ENCODE measurements at regions of chrX and their contacts with region 1.

Region 1: DNA sequence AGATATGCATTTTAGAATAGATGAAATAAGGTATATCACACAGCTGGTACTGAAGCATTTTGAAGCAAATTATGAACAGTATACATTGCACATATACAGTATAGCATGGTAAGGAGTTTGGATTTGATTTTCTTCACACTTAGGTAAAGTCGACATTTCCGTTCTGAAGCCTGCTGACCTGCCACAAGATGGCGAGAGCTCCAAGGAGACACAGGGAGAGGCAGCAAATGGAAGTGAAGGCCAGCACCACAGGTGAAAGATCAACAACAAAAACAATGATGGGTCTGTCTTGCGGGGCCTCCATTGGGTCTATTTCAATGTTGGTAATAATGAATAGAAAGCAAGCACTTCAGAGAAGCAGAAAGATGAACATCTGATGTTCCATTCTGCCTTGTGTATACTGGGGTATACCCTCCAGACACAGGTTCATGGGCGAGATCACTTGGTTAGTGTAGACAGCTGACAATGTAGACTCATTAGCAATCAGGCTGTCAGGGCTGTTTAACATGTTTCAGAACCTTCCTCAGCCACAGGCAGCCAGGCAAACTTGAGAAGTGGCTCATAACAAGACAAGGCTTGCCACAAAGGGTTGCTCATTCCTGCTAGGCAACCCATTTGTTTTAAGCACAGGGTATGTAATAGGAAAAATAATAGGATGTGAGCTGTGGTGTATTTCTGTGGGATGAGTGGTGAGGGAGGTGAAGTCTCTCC is 21.4 kb upstream of the NOX1 start:
- DNase-seq: peak; percentile 8
- H3K4me3 Mint-ChIP-seq: no peak overlapping the region
- H3K27ac Mint-ChIP-seq: no peak overlapping the region
- H3K4me1 Mint-ChIP-seq: peaks cover 1% of the 10 kb centered on the region
- H3K27me3 Mint-ChIP-seq: no peaks in the 10 kb centered on the region

Region 2: DNA sequence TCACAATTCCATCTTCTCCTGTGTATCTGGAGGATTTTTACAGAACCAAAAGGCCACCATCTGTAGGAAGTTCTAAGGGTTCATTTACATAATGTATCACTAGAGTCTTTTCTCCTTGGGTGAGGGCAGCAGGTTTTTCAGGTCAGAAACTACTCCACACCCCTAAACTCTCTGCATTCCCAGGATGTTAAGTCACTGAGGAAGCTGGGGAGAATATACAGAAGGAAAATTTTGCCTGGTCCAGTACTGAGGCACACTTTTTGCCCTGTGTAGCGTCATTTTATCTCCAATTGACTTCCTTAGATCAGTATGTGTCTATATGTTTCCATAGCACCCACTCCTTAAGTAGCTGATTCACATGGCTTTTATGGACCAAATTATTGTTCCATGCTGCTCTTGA is 16.2 kb after region 1 on chrX:
- intact Hi-C with region 1: no loop called
- DNase-seq: no peak
- H3K4me3 Mint-ChIP-seq: no peak overlapping the region
- H3K27ac Mint-ChIP-seq: no peak overlapping the region
- H3K4me1 Mint-ChIP-seq: no peaks in the 10 kb centered on the region
- H3K27me3 Mint-ChIP-seq: no peaks in the 10 kb centered on the region

Region 3: DNA sequence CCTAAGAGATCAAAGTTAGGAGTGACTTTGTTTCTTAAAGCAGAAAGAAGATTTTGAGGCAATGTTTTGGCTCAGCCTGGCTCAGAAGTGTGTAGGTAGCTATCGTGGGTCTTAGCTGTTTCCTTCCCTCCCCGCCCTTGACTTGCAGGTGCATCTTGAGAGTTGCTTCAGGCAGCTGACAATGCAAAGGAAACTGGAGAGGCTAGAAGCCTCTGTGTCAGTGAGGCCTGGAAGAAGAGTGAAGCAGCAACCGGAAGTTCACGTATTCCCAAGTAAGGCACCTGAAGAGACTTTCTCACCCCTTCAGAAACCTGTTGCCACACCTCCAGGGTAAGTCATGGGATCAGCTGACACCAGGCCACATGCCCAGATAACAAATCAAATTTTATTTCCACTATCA is 43.8 kb after region 1 on chrX:
- intact Hi-C with region 1: no loop called
- DNase-seq: no peak
- H3K4me3 Mint-ChIP-seq: no peak overlapping the region
- H3K27ac Mint-ChIP-seq: no peak overlapping the region
- H3K4me1 Mint-ChIP-seq: no peaks in the 10 kb centered on the region
- H3K27me3 Mint-ChIP-seq: no peaks in the 10 kb centered on the region

Region 4: DNA sequence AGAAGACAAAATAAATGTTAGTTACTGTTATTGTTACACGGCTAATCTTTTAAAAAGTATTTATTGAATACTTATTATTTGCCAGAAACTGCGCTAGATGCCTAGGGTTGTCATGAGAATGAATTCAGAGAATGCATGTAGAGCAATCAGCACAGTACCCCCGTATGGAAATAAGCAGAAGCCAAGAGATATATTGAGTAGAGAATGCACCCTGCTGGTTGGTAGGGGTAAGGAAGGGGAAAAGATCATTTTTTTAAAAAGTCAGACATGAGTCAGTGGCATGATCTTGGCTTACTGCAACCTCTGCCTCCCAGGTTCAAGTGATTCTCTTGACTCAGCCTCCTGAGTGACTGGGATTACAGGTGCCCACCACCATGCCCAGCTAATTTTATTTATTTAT is 311.0 kb after region 1 on chrX:
- intact Hi-C with region 1: loop called (anchors 2 kb)
- DNase-seq: no peak
- H3K4me3 Mint-ChIP-seq: no peak overlapping the region
- H3K27ac Mint-ChIP-seq: no peak overlapping the region
- H3K4me1 Mint-ChIP-seq: peaks cover 12% of the 10 kb centered on the region
- H3K27me3 Mint-ChIP-seq: no peaks in the 10 kb centered on the region